ENCODE measurements at regions of chr2 and their contacts with region 1.

Region 1: DNA sequence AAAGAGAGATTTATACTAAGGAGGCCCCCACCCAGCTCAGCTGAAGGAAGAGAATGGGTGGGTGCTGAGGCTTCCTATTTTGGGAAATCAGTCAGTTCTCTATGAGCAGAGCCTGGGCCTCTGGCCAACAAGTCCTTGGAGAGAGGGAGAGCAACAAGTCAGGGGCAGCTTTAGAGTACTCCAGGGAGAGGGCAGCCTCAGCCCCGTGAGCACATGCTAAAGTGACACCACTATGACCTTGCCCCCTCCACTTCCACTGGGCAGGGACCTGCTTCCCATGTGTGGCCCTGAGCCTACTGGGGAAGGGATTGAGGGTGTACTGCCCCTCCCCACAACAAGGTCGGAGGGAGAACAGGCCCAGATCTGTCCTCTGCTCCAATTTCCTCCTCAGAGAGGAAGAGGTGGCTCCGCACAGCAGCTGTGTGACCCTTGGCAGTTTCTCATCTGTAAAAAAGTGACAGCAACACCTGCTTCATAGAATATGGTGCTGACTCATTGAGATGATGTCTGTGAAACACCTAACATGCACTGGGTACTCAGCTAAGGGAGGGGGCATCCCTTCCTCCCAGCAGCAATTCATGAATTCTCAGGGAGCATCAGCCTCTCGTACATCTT is 72.9 kb downstream of the CLHC1 start:
- DNase-seq: peak; percentile 51 to 68
- ATAC-seq: peak; percentile 80 to 81 (median 81)
- H3K4me3 ChIP-seq: no peak overlapping the region
- H3K27ac ChIP-seq: peak overlapping the region; percentile 62
- H3K4me1 ChIP-seq: peaks cover 20% of the 10 kb centered on the region
- H3K27me3 ChIP-seq: no peaks in the 10 kb centered on the region
- CTCF ChIP-seq: no peak

Region 2: DNA sequence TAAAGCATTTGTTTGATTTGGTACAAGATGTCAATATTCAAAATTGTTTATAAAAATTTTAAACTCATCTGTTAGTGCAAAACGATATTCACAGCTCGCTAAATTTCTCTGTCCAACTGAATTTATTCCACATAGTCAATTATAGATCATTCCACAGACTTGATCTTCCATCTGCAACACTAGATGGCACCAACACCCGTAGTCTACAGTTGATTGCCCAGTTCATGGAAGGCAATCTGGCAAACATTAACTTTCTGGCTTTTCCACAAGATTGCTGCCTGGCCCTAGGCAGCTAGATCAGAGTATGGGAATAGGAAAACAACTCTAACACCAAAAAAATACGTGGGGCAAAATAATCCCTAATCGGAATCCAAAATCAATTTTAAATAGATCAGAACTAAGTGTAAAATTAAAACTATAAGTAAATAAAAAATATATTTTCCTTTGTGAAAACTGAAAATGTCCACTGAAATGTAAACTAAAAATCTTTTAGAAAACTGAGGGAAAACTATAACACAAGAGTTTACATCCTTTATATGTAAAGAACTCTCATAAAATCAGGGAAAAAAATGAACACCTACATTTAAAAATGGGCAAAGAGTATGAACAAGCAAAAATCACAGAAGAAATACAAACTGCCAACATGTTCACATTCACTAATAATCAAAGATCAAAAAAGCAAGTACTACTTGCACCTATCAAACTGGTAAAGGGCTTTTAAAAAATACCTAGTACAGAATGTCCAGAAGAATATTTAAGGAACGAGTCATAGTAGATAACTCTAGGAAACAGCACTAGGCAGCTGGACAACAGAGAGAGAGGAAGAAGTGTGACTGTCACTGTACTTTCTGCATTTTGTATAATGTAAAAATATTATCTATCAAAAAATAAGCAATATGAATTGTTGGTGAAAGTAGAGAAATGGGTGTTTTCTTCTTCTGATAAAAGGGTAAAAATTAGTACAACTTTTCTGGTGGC is 143.9 kb before region 1 on chr2:
- intact Hi-C with region 1: loop called in 1 of 2 experiments (anchors 5 kb)
- DNase-seq: no peak
- ATAC-seq: peak; percentile 69 to 79 (median 72)
- H3K4me3 ChIP-seq: no peak overlapping the region
- H3K27ac ChIP-seq: peak overlapping the region; percentile 95
- H3K4me1 ChIP-seq: peaks cover 38% of the 10 kb centered on the region
- H3K27me3 ChIP-seq: no peaks in the 10 kb centered on the region
- CTCF ChIP-seq: peak; percentile 71

Region 3: GRCh38 chr2:55056024-55056521 is 103.1 kb before region 1 on chr2:
- intact Hi-C with region 1: loop called in 1 of 2 experiments (anchors 5 kb)
- DNase-seq: no peak
- ATAC-seq: peak in 3 of 4 donors; percentile 24 to 45 (median 29)
- H3K4me3 ChIP-seq: no peak overlapping the region
- H3K27ac ChIP-seq: no peak overlapping the region
- H3K4me1 ChIP-seq: peaks cover 13% of the 10 kb centered on the region
- H3K27me3 ChIP-seq: no peaks in the 10 kb centered on the region
- CTCF ChIP-seq: no peak

Region 4: GRCh38 chr2:55099878-55100820 is 59.0 kb before region 1 on chr2:
- intact Hi-C with region 1: no loop called
- DNase-seq: no peak
- ATAC-seq: peak; percentile 61 to 86 (median 83)
- H3K4me3 ChIP-seq: peak overlapping the region; percentile 26
- H3K27ac ChIP-seq: peak overlapping the region; percentile 80
- H3K4me1 ChIP-seq: peaks cover 39% of the 10 kb centered on the region
- H3K27me3 ChIP-seq: no peaks in the 10 kb centered on the region
- CTCF ChIP-seq: no peak

Region 5: GRCh38 chr2:55120634-55121359 is 38.3 kb before region 1 on chr2:
- intact Hi-C with region 1: loop called in 1 of 2 experiments (anchors 5 kb)
- DNase-seq: peak; percentile 60 to 80
- ATAC-seq: peak; percentile 93 to 97 (median 94)
- H3K4me3 ChIP-seq: peak overlapping the region; percentile 24
- H3K27ac ChIP-seq: peak overlapping the region; percentile 71
- H3K4me1 ChIP-seq: peaks cover 24% of the 10 kb centered on the region
- H3K27me3 ChIP-seq: no peaks in the 10 kb centered on the region
- CTCF ChIP-seq: no peak

Region 6: DNA sequence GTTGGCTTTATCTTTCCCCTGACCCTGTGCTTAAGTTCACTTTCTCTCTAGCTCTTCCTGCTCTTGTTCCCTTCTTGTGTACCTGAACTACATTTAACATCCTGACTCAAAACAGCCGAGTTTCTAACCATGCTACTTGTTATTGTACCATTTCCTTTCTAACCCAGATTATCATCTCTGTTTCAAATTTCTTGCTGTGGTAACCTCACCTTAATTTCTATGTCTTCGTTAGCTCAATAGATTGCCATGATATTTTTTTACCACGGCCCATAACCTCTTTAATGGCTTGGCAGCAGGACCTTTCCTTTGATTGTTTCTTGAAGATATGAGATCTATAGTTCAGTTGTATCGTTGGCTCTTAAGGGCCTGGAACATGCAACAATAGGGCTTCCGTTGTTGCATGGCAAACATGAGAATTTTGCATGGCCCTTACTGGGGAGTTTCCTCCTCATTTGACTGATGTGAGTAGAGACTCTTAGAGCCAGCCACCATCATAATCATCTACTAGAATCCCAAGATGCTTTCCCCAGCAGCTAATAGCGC is 371.5 kb after region 1 on chr2:
- intact Hi-C with region 1: no loop called
- DNase-seq: no peak
- ATAC-seq: no peak
- H3K4me3 ChIP-seq: no peak overlapping the region
- H3K27ac ChIP-seq: no peak overlapping the region
- H3K4me1 ChIP-seq: no peaks in the 10 kb centered on the region
- H3K27me3 ChIP-seq: no peaks in the 10 kb centered on the region
- CTCF ChIP-seq: no peak

Measured in psoas muscle (tissue), 8 donors.